AG04450 (cell line): ENCODE measurements at regions of chr10 and their contacts with region 1.

Region 1: DNA sequence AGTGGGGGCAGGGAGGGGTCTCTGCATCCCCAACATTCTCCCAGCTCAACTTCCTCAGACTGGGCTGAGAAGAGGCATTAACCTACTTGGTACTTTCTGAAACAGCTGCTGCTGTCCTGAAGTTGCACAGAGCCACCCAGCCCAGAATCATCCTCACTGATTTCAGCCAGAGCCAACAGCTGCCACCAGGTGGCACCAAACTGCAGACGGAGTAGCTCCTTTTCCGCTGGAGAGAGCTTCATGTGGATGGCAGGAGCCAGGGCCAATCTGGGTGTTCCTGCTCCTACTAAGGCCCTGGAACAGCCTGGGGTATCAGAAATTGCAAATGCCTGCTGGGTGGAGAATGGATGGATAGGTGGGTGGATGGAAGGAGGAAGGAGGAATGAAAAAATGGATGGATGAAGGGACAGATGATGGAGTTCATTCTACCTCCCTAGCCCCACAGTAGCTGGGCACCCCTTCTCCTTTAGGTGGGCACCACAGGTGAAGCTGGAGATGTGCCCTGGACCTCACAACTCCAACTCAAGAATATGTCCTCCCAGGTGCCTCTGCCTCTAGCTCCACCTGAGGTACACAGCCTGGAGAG is 11.8 kb upstream of the DRGX start:
- DNase-seq: peak; percentile 21
- H3K4me3 ChIP-seq: no peak overlapping the region
- H3K27ac ChIP-seq: no peak overlapping the region
- H3K27me3 ChIP-seq: peaks cover 20% of the 10 kb centered on the region
- CTCF ChIP-seq: peak; percentile 94

Region 2: DNA sequence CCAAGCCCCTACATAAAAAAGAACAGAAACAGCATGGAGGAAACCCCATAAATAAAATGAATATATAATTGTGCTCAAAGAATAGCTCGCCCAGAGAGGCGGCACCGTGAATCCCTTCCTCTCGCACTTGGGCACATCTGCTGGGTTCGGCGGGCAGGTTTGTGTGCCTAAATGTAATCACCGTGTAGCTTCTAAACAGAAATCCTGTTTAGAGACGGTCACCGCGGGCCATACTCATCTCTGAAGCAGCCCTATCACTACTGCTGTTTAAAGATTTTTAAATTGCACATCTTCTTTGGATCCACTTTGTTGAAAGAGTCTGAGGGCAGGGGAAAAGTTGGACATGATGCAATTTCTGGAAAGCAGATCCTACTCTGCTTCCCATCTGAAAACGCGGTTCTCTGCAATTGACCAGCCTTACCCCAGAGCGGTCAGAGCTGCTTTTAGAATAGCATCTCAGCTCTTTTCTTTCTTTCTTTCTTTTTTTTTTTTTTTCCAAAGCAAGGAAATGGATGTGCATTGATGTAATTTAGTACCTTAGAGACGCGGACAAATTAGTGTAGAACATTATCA is 18.2 kb before region 1 on chr10:
- CTCF ChIA-PET with region 1: interaction called, 13 read pairs
- POLR2A ChIA-PET with region 1: no interaction called
- DNase-seq: no peak
- H3K4me3 ChIP-seq: no peak overlapping the region
- H3K27ac ChIP-seq: no peak overlapping the region
- H3K27me3 ChIP-seq: peaks cover 23% of the 10 kb centered on the region
- CTCF ChIP-seq: no peak

Region 3: GRCh38 chr10:49433069-49433468 is 25.4 kb after region 1 on chr10:
- CTCF ChIA-PET with region 1: interaction called, 13 read pairs
- POLR2A ChIA-PET with region 1: no interaction called
- DNase-seq: no peak
- H3K4me3 ChIP-seq: no peak overlapping the region
- H3K27ac ChIP-seq: no peak overlapping the region
- H3K27me3 ChIP-seq: no peaks in the 10 kb centered on the region
- CTCF ChIP-seq: no peak

Region 4: GRCh38 chr10:49512121-49512809 is 104.6 kb after region 1 on chr10:
- CTCF ChIA-PET with region 1: interaction called, 229 read pairs
- POLR2A ChIA-PET with region 1: no interaction called
- DNase-seq: no peak
- H3K4me3 ChIP-seq: no peak overlapping the region
- H3K27ac ChIP-seq: no peak overlapping the region
- H3K27me3 ChIP-seq: no peaks in the 10 kb centered on the region
- CTCF ChIP-seq: peak; percentile 75

Region 5: GRCh38 chr10:49524496-49524895 is 116.9 kb after region 1 on chr10:
- CTCF ChIA-PET with region 1: interaction called, 77 read pairs
- POLR2A ChIA-PET with region 1: no interaction called
- DNase-seq: no peak
- H3K4me3 ChIP-seq: no peak overlapping the region
- H3K27ac ChIP-seq: no peak overlapping the region
- H3K27me3 ChIP-seq: no peaks in the 10 kb centered on the region
- CTCF ChIP-seq: no peak